Tibial artery (tissue), 4 donors: ENCODE measurements at regions of chr22 and their contacts with region 1.

Region 1: GRCh38 chr22:20419664-20419951 is 18.0 kb downstream of the SCARF2 start:
- DNase-seq: no peak
- H3K4me3 ChIP-seq: no peak overlapping the region
- H3K27ac ChIP-seq: no peak overlapping the region
- H3K4me1 ChIP-seq: peaks cover 0 to 27% (median 21%) of the 10 kb centered on the region in 4 donors
- H3K27me3 ChIP-seq: no peaks in the 10 kb centered on the region
- CTCF ChIP-seq: no peak

Region 2: GRCh38 chr22:20455709-20456063 is 36.1 kb after region 1 on chr22:
- intact Hi-C with region 1: loop called (anchors 1 kb)
- DNase-seq: peak in 1 of 2 donors; percentile 27
- H3K4me3 ChIP-seq: no peak overlapping the region
- H3K27ac ChIP-seq: no peak overlapping the region
- H3K4me1 ChIP-seq: no peaks in the 10 kb centered on the region
- H3K27me3 ChIP-seq: no peaks in the 10 kb centered on the region
- CTCF ChIP-seq: no peak